ENCODE measurements at regions of chr18 and their contacts with region 1.

Region 1: GRCh38 chr18:46148810-46149209 is 44.6 kb downstream of the HAUS1 start:
- DNase-seq: peak; percentile 47
- H3K4me3 ChIP-seq: no peak overlapping the region
- H3K27ac ChIP-seq: no peak overlapping the region
- H3K4me1 ChIP-seq: no peaks in the 10 kb centered on the region
- CTCF ChIP-seq: peak; percentile 78

Region 2: DNA sequence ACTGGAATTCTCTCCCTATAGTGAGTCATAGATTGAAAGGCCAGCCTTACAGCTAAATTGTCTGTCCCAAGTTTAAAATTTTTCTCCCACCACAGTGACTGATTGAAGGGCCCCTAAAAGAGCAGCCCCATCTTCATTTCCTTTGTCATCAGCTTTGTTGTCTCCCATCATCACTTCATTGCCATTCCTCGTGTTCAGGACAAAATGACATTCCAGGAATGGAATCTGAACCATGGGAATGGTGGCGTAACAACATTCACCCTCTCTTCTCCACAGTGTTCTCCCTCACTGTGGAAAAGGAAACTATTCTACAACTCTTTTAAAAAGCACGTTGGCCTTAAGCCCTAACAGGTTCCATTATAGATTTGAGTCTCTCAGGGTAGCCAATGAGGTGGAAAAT is 128.9 kb before region 1 on chr18:
- CTCF ChIA-PET with region 1: no interaction called
- POLR2A ChIA-PET with region 1: no interaction called
- intact Hi-C with region 1: no loop called
- DNase-seq: no peak
- H3K4me3 ChIP-seq: no peak overlapping the region
- H3K27ac ChIP-seq: no peak overlapping the region
- H3K4me1 ChIP-seq: no peaks in the 10 kb centered on the region
- CTCF ChIP-seq: no peak

Region 3: GRCh38 chr18:46173393-46174341 is 24.9 kb after region 1 on chr18:
- CTCF ChIA-PET with region 1: no interaction called
- POLR2A ChIA-PET with region 1: interaction called, 5 read pairs
- intact Hi-C with region 1: loop called (anchors 2 kb)
- DNase-seq: peak; percentile 91
- H3K4me3 ChIP-seq: peak overlapping the region; percentile 97
- H3K27ac ChIP-seq: peak overlapping the region; percentile 74
- H3K4me1 ChIP-seq: peaks cover 31% of the 10 kb centered on the region
- CTCF ChIP-seq: peak; percentile 78

Region 4: DNA sequence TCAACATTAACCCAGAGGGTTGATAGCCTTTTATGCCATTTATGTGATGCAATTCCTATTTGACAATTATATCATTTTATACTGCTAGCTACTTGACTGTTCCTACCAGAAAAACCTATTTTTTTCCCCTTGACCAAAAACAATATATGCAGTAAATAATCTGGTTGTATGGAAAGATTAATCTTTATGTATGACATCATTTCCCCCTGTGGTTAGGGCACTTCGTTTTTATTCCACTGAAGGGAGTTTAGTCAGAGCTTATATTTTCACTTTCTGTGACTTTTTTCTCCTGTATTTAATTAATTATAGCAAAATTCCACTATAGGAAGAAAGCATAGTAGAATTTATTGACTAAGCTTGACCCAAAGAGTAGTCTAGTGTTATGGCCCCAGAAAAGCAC is 63.0 kb after region 1 on chr18:
- CTCF ChIA-PET with region 1: no interaction called
- POLR2A ChIA-PET with region 1: no interaction called
- intact Hi-C with region 1: no loop called
- DNase-seq: no peak
- H3K4me3 ChIP-seq: no peak overlapping the region
- H3K27ac ChIP-seq: no peak overlapping the region
- H3K4me1 ChIP-seq: peaks cover 14% of the 10 kb centered on the region
- CTCF ChIP-seq: no peak

Region 5: DNA sequence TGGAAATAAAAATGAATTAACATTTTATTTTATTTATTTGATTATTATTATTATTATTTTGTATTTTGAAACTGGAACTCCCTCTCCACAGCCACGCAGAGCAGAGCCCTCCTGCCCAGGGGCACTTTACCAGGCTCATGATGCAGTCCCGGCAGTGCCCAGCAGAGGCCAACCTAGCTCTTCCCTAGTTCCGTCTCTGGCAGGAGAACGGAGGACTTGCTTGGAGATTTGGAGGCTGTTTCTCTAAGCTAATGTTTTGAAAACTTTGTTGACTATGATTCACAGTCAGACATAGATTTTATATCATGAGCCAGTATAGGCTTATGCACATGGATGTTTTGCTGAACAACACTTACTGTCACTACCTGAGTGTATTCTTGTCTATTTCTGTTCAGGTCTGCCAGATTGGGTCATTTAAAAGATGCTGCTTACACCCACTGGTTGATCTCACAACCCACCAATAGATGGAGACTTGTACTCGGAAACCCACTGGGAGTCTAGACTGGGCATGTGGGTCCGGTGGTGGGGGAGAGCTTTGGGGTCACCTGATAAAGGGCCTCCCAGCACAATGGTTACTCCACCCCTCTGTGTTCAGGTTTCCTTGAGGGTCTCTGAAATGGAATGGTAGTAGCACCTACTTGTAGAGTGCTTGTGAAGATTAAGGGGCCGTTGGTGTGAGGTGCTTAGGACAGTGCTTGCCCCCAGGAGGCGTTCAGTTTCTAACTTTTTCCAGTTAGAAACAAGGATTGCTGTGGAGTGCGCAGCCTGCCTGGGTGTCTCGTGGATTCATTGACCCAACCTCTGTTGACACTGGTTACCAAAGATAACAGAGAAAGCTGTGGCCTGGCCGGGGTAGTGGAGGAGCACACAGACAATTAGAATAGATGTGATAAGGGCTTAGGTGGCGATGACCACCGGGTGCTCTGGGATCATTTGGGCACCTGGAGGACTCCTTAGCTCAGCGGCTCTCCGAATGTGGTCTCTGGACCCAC is 132.7 kb after region 1 on chr18:
- CTCF ChIA-PET with region 1: interaction called, 3 read pairs
- POLR2A ChIA-PET with region 1: no interaction called
- intact Hi-C with region 1: loop called (anchors 5 kb)
- DNase-seq: peak; percentile 56
- H3K4me3 ChIP-seq: no peak overlapping the region
- H3K27ac ChIP-seq: no peak overlapping the region
- H3K4me1 ChIP-seq: no peaks in the 10 kb centered on the region
- CTCF ChIP-seq: peak; percentile 77

Region 6: GRCh38 chr18:46481048-46481846 is 332.4 kb after region 1 on chr18:
- CTCF ChIA-PET with region 1: no interaction called
- POLR2A ChIA-PET with region 1: no interaction called
- intact Hi-C with region 1: loop called (anchors 2 kb)
- DNase-seq: peak; percentile 39
- H3K4me3 ChIP-seq: no peak overlapping the region
- H3K27ac ChIP-seq: no peak overlapping the region
- H3K4me1 ChIP-seq: no peaks in the 10 kb centered on the region
- CTCF ChIP-seq: peak; percentile 70

Region 7: DNA sequence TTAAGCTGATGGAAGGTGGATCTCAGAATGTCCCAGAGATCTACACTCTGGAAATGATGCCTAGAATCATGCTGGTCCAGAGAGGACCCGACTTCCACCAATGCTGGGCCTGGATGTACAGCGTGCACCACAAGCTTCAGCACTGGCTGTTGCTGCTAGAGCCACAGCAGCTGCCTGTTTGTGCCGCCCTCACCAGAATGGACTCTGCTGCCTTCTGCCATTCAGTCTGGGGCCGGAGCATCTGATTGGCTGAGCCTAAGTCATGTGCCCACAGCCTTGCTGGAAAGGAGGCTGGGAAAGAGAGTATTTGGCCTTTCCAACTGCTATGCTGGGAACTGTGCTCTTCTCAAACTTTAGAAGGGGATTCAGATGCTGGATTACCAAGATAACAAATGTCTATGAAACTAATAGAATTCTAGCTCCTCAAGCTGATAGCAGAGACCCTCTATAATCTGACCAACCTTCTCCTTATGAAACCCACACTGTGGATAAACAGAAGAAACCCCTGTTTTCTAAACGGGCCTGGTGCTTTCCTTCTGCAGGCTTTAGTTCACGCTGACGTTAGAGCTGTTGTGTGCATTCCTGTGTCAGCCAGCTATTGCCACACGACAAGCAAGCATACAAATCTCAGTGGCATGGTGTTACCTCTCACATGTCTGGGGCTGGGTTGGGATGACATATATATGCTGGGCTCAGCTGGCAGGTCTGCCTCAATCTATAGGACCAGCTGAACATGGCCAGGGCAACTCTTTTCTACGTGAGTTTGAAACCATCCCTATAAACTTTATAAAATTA is 512.3 kb after region 1 on chr18:
- CTCF ChIA-PET with region 1: no interaction called
- POLR2A ChIA-PET with region 1: no interaction called
- intact Hi-C with region 1: loop called (anchors 1 kb)
- DNase-seq: no peak
- H3K4me3 ChIP-seq: no peak overlapping the region
- H3K27ac ChIP-seq: no peak overlapping the region
- H3K4me1 ChIP-seq: no peaks in the 10 kb centered on the region
- CTCF ChIP-seq: no peak